HCT116 (cell line): ENCODE measurements at regions of chr10 and their contacts with region 1.

Region 1: DNA sequence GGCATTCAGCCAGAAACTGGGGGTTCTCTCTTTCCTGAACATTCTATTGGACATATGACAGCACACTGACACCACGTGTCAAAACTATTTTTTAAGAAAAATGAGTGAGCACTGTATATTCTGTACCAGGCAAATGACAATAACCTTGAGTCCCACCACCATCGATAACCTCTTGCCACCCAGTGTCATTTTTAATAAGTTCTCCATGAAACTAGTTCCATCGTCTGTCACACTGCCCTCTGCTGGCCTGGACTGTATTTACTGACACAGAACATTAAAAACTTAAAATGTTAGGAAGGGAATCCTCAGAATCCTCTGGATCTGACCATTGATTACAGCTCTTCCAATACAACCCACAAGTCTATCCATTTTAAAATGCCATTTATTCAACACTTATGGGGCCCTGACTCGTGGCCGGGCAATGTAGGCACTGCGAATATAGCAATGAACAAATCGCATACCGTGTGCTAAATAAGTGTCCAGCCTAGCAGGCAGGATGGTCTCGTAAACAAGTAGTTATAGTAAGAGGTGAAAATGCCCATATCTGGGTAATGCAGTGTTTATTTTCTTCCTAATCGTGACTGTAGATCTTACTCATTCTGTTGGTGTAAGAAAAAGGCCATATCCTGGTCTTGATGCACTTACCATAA is 35.9 kb upstream of the CACNB2 start:
- DNase-seq: peak; percentile 28
- ATAC-seq: peak; percentile 58
- H3K4me3 ChIP-seq: no peak overlapping the region
- H3K27ac ChIP-seq: no peak overlapping the region
- H3K4me1 ChIP-seq: no peaks in the 10 kb centered on the region
- H3K27me3 ChIP-seq: peaks cover 5% of the 10 kb centered on the region; the same call in 1 of the 2 replicates
- CTCF ChIP-seq: peak; percentile 58 to 81 (median 67); a peak in 5 of 6 replicates
- POLR2A ChIP-seq: no peak
- RAD21 ChIP-seq: peak; percentile 53

Region 2: GRCh38 chr10:17820943-17821342 is 283.4 kb before region 1 on chr10:
- CTCF ChIA-PET with region 1: no interaction called
- POLR2A ChIA-PET with region 1: no interaction called
- RAD21 ChIA-PET with region 1: no interaction called
- intact Hi-C with region 1: no loop called
- DNase-seq: no peak
- ATAC-seq: no peak
- H3K4me3 ChIP-seq: no peak overlapping the region
- H3K27ac ChIP-seq: no peak overlapping the region
- H3K4me1 ChIP-seq: no peaks in the 10 kb centered on the region
- H3K27me3 ChIP-seq: 0 out of 2 replicates have a peak, but pooled peaks cover 5% of the 10 kb centered on the region
- CTCF ChIP-seq: no peak
- POLR2A ChIP-seq: no peak
- RAD21 ChIP-seq: no peak

Region 3: GRCh38 chr10:17910125-17910789 is 194.1 kb before region 1 on chr10:
- CTCF ChIA-PET with region 1: no interaction called
- POLR2A ChIA-PET with region 1: no interaction called
- RAD21 ChIA-PET with region 1: no interaction called
- intact Hi-C with region 1: loop called (anchors 1 kb)
- DNase-seq: peak; percentile 46
- ATAC-seq: peak; percentile 94
- H3K4me3 ChIP-seq: no peak overlapping the region
- H3K27ac ChIP-seq: no peak overlapping the region
- H3K4me1 ChIP-seq: no peaks in the 10 kb centered on the region
- H3K27me3 ChIP-seq: 0 out of 2 replicates have a peak, but pooled peaks cover 6% of the 10 kb centered on the region
- CTCF ChIP-seq: peak; percentile 53 to 77 (median 59); a peak in 5 of 6 replicates
- POLR2A ChIP-seq: no peak
- RAD21 ChIP-seq: peak; percentile 68

Region 4: GRCh38 chr10:18279173-18279572 is 174.8 kb after region 1 on chr10:
- CTCF ChIA-PET with region 1: no interaction called
- POLR2A ChIA-PET with region 1: no interaction called
- RAD21 ChIA-PET with region 1: no interaction called
- intact Hi-C with region 1: no loop called
- DNase-seq: no peak
- ATAC-seq: no peak
- H3K4me3 ChIP-seq: no peak overlapping the region
- H3K27ac ChIP-seq: no peak overlapping the region
- H3K4me1 ChIP-seq: no peaks in the 10 kb centered on the region
- H3K27me3 ChIP-seq: no peaks in the 10 kb centered on the region
- CTCF ChIP-seq: no peak
- POLR2A ChIP-seq: no peak
- RAD21 ChIP-seq: no peak